Transverse colon (tissue), 4 donors: ENCODE measurements at regions of chr4 and their contacts with region 1.

Region 1: GRCh38 chr4:168877511-168878491 is 132.3 kb downstream of the CBR4 start:
- DNase-seq: no peak
- H3K4me3 ChIP-seq: peak overlapping the region in 3 of 4 donors; percentile 10 to 48 (median 34)
- H3K27ac ChIP-seq: peak overlapping the region; percentile 70 to 83 (median 82)
- H3K4me1 ChIP-seq: peaks cover 0 to 45% (median 6%) of the 10 kb centered on the region in 4 donors
- H3K27me3 ChIP-seq: no peaks in the 10 kb centered on the region
- CTCF ChIP-seq: no peak
- EP300 ChIP-seq: no peak
- POLR2A ChIP-seq: no peak

Region 2: GRCh38 chr4:168839758-168840391 is 37.9 kb before region 1 on chr4:
- in situ Hi-C with region 1: no loop called
- intact Hi-C with region 1: loop called (anchors 5 kb)
- DNase-seq: no peak
- H3K4me3 ChIP-seq: no peak overlapping the region
- H3K27ac ChIP-seq: peak overlapping the region; percentile 90 to 93 (median 92)
- H3K4me1 ChIP-seq: peaks cover 5 to 48% (median 37%) of the 10 kb centered on the region in 4 donors
- H3K27me3 ChIP-seq: no peaks in the 10 kb centered on the region
- CTCF ChIP-seq: no peak
- EP300 ChIP-seq: peak; percentile 83
- POLR2A ChIP-seq: no peak